Activated naive CD4-positive, alpha-beta T cell treated with anti-CD3 and anti-CD28 coated beads for 36 hours (primary cell): ENCODE measurements at regions of chr7 and their contacts with region 1.

Region 1: GRCh38 chr7:23105644-23106056 is at the start of gene KLHL7:
- DNase-seq: peak; percentile 98
- H3K4me3 Mint-ChIP-seq: peak within 1 kb of the TSS; percentile 93
- H3K27ac Mint-ChIP-seq: peak within 1 kb of the TSS; percentile 89
- H3K4me1 Mint-ChIP-seq: peaks cover 35% of the 10 kb centered on the region
- H3K27me3 Mint-ChIP-seq: no peaks in the 10 kb centered on the region
- total RNA-seq, gene KLHL7: 24.0 to 26.4 TPM

Region 2: DNA sequence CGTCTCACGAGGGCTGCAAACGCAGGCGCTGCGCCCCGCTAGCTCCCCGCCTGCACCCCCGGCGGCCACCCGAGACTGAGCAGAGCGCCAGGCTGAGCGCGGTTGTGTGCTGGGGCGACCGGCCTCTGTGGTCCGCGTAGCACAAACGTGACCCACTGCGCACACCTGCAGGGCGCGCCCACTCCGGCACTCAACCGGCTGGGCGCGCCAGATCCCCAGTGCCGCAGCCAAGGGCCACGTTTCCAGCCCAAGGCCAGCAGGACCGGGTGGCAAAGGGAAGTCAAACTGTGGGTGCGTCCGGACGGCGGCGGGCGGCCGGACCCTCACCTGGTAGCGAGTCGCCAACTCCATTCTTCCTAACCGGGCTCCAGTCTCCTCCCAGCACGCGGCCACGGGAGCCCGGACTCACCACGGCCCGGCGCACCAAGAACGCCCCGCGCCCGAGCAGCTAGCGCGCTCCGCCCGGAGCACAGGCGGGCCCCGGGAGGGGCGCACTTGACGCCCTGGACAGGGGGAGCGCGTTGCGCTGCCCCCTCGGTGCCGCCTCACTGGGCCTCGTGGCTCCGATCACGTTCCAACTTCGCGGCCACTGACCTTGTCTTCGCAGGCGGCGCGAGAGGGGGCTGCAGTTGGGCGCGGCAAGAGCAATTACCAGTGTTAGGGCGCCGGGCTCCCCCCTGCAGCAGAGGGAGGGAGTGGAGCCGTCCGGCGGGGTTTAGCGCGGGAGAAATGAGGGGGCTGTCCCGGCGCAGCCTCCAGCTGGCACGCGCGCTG is 1160.0 kb before region 1 on chr7 and contains the start of gene CDCA7L:
- CTCF ChIA-PET with region 1: no interaction called
- intact Hi-C with region 1: loop called (anchors 10 kb)
- DNase-seq: peak; percentile 85
- H3K4me3 Mint-ChIP-seq: peak within 1 kb of the TSS; percentile 86
- H3K27ac Mint-ChIP-seq: peak within 1 kb of the TSS; percentile 84
- H3K4me1 Mint-ChIP-seq: peaks cover 63% of the 10 kb centered on the region
- H3K27me3 Mint-ChIP-seq: no peaks in the 10 kb centered on the region
- total RNA-seq, gene CDCA7L: 101 to 103 TPM

Region 3: GRCh38 chr7:22822486-22823141 is 283.0 kb before region 1 on chr7 and contains the start of gene TOMM7:
- CTCF ChIA-PET with region 1: no interaction called
- intact Hi-C with region 1: loop called (anchors 2 kb)
- DNase-seq: peak; percentile 92
- H3K4me3 Mint-ChIP-seq: peak within 1 kb of the TSS; percentile 99
- H3K27ac Mint-ChIP-seq: peak within 1 kb of the TSS; percentile 96
- H3K4me1 Mint-ChIP-seq: peaks cover 36% of the 10 kb centered on the region
- H3K27me3 Mint-ChIP-seq: peaks cover 10% of the 10 kb centered on the region
- total RNA-seq, gene TOMM7: 269 to 297 TPM

Region 4: DNA sequence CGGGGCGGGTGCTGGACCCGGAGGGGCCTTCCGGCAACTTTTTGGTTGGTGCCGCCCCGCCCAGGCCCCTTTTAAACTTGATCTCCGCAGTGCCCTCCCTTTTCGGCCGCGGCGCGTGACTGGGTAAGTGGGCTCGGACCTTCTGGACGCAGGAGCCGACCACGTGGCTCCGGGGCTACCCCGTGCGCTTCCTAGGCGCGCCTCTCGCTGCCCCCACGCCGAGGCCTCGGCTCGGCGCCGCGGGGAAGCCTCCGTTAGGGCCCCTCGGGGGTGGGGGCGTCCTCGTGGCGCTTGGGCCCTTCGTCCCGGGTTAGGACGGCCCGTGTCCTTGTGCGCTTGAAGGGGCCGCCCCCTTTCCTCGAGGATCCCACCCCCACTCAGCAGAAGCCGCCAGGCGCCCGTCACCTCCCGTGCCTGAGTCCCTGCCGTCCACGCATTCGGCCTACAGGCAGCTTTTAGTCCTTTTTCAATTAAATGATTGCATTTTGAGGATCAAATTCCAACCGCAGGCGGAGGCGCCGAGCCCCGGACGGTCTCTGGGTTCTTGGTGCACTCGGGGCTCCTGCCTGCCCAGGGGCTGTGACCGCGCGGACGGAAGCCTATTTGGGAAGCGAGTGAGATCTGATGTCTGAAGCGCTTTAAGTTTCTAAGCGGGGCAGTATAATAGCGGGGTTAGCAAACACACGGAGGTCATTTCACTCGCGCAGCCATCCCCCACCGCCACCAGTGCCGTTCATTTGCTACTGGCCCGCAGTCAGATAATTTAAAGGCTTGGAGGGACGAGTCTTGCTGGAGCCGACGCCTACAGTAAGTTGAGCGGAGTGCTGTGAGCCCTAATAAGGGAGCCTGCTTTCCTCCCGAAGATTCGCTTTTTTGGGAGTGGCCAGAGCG is 251.2 kb before region 1 on chr7:
- CTCF ChIA-PET with region 1: no interaction called
- intact Hi-C with region 1: loop called (anchors 1 kb)
- DNase-seq: peak; percentile 78
- H3K4me3 Mint-ChIP-seq: peak overlapping the region; percentile 87
- H3K27ac Mint-ChIP-seq: peak overlapping the region; percentile 94
- H3K4me1 Mint-ChIP-seq: peaks cover 32% of the 10 kb centered on the region
- H3K27me3 Mint-ChIP-seq: peaks cover 3% of the 10 kb centered on the region

Region 5: DNA sequence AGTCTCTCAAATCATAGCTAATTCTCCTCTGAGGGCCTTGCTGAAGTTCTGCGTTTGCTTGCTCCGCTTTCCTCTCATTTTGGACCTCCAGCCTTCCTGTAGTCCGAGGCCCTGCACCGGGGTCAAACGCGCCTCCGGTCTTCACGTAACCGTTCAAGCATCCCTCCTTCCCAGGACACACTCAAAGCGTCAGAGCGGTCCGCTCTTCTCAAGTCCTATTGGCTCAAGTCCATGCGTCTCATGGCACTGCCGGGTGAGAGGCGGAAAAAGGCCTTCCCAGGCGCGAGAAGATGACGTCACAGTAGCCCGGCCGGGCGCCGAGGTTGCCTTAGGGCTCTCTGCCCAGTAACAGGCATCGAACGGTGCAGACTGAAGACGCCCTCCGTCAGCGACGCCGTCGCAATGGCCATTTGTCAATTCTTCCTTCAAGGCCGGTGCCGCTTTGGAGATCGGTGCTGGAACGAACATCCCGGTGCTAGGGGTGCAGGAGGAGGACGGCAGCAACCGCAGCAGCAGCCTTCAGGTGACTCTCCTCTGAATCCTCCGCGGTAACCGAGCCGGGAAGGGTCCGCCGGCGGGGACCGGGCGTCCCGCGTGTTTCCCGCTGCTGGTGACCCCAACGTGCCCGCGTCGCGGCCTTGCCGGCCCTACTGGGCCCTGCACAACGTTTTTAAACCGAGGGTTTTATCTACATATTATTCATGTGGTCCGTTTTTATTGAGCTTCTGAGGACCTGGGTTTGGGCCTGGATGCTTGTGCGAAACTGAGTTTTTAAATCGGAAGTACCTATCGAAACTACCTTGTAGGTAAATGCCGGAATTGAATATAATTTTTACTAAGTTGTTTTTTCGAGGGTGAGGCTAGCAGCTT is 76.3 kb after region 1 on chr7 and contains the start of gene NUP42:
- CTCF ChIA-PET with region 1: interaction called, 4 read pairs
- intact Hi-C with region 1: loop called (anchors 1 kb)
- DNase-seq: peak; percentile 98
- H3K4me3 Mint-ChIP-seq: peak within 1 kb of the TSS; percentile 99
- H3K27ac Mint-ChIP-seq: peak within 1 kb of the TSS; percentile 99
- H3K4me1 Mint-ChIP-seq: peaks cover 35% of the 10 kb centered on the region
- H3K27me3 Mint-ChIP-seq: no peaks in the 10 kb centered on the region
- total RNA-seq, gene NUP42: 15.2 to 17.0 TPM

Region 6: GRCh38 chr7:23474094-23474828 is 368.6 kb after region 1 on chr7:
- CTCF ChIA-PET with region 1: no interaction called
- intact Hi-C with region 1: loop called (anchors 10 kb)
- DNase-seq: peak; percentile 91
- H3K4me3 Mint-ChIP-seq: peak overlapping the region; percentile 76
- H3K27ac Mint-ChIP-seq: peak overlapping the region; percentile 30
- H3K4me1 Mint-ChIP-seq: peaks cover 22% of the 10 kb centered on the region
- H3K27me3 Mint-ChIP-seq: peaks cover 57% of the 10 kb centered on the region

Region 7: DNA sequence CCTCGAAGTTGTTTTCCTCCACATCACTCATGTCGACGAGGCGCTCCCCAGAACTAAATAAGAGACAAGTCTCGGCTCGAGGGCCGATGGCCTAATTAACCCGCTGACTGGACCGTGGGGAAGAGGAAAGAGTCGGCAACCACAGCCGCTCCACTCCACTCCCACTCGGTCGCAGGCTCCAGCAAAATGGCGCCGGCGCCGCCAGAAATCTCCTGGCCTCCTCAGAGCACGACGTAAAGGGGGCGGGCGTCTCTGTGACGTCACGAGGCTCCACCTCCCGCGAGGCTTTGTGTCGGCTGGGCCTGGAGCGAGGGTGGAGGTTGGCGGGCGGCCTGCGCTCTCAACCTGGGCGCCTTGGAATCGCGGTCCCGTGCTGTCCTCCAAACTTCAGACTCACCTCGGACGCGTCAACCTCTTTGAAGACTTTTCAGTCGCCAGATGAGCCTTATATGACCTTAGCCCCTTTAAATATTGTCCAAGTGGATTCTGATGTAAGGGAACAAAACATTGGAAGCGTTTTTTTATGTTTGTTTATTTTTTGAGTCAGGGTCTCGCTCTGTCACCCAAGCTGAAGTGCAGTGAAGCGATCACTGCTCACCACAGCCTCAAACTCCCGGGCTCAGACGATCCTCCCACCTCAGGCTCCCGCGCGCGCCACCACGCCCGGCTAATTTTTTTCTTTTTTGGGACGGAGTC is 426.3 kb after region 1 on chr7 and contains the start of gene TRA2A:
- CTCF ChIA-PET with region 1: no interaction called
- intact Hi-C with region 1: loop called (anchors 1 kb)
- DNase-seq: peak; percentile 99
- H3K4me3 Mint-ChIP-seq: peak within 1 kb of the TSS; percentile 99
- H3K27ac Mint-ChIP-seq: peak within 1 kb of the TSS; percentile 100
- H3K4me1 Mint-ChIP-seq: peaks cover 43% of the 10 kb centered on the region
- H3K27me3 Mint-ChIP-seq: no peaks in the 10 kb centered on the region
- total RNA-seq, gene TRA2A: 77.8 to 79.0 TPM

Region 8: GRCh38 chr7:23837659-23838058 is 732.0 kb after region 1 on chr7:
- CTCF ChIA-PET with region 1: no interaction called
- intact Hi-C with region 1: no loop called
- DNase-seq: no peak
- H3K4me3 Mint-ChIP-seq: no peak overlapping the region
- H3K27ac Mint-ChIP-seq: no peak overlapping the region
- H3K4me1 Mint-ChIP-seq: no peaks in the 10 kb centered on the region
- H3K27me3 Mint-ChIP-seq: no peaks in the 10 kb centered on the region